BJ (cell line): ENCODE measurements at regions of chr19 and their contacts with region 1.

Region 1: GRCh38 chr19:48842789-48843162 is 6.5 kb upstream of the HSD17B14 start:
- DNase-seq: no peak
- H3K4me3 ChIP-seq: no peak overlapping the region
- H3K27me3 ChIP-seq: no peaks in the 10 kb centered on the region
- CTCF ChIP-seq: peak; percentile 79

Region 2: GRCh38 chr19:48646001-48646721 is 196.6 kb before region 1 on chr19 and contains the start of gene CA11:
- CTCF ChIA-PET with region 1: interaction called, 11 read pairs
- POLR2A ChIA-PET with region 1: no interaction called
- DNase-seq: no peak
- H3K4me3 ChIP-seq: peak within 1 kb of the TSS; percentile 47
- H3K27me3 ChIP-seq: no peaks in the 10 kb centered on the region
- CTCF ChIP-seq: peak; percentile 94
- polyA plus RNA-seq, gene CA11: 3.0 and 3.2 TPM in 2 replicates

Region 3: DNA sequence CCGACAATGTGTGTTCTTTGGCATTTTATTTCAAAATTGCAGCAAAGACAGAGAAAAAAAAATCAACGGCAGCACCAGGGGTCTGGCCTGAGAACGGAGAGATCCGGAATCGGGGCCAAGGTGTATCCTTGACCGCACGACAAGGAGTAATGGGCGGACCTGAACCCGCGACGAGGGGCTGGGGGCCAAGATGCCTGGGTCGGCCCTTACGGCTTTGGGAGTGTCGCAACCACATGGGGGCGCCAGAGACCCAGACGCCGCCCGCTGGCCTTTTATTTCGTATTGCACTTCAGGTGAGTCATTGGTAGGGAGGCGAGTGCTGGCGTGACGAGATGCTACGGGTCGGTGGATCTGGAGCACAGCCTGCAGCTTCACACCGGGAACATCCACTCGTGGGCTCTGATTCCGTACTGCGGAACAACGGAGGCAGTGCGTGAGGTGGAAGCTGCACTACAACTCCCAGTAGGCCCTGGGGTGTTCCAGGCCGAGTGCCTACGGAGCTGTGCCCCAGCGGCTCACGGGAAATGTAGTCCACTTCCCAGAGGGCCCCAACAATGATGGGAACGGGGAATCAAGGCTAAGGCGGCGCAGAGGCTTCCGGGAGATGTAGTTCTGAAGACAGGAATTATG is 47.6 kb before region 1 on chr19:
- CTCF ChIA-PET with region 1: interaction called, 195 read pairs
- POLR2A ChIA-PET with region 1: no interaction called
- DNase-seq: peak; percentile 67
- H3K4me3 ChIP-seq: peak overlapping the region; percentile 20
- H3K27me3 ChIP-seq: no peaks in the 10 kb centered on the region
- CTCF ChIP-seq: peak; percentile 94

Region 4: DNA sequence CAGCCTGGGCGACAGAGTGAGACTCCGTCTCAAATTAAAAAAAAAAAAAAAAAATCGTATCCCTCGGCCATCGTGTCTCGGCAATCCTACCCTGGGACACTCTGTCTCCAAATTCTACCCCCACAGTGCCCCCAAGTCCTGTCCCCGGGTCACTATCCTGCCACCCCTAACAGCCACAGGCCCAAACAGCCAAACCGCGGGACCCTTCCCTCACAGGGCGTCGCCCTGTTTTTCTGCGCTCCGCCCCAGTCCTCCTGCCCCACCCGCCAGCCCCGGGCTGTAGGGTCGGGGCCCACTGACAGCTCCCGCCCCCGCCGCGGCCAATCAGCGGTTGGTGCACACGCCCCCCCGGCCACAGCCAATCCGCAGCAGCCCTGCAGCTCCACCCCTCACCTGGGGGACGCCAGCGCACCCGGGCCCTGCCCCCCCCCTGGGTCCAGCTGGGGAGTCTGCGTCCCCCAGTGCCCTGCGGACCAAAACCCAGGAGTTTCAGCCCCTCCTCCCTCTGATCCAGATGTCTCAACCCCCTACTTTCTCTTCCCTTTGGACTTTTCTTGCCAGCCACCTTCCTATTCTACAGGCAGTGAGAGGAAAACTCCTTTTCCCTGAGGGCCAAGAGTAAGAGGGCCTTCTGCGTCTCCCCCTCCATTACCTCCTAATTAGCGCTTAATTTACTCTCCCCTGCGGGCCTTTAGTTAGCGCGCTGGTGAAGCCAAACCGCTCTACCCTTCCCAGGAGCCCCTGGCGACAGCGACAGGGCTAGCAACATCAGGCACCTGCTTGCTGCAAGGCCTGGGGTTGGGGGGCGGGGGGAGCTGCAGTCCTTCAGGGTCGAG is 30.5 kb before region 1 on chr19:
- CTCF ChIA-PET with region 1: interaction called, 12 read pairs
- POLR2A ChIA-PET with region 1: no interaction called
- DNase-seq: no peak
- H3K4me3 ChIP-seq: peak overlapping the region; percentile 80
- H3K27me3 ChIP-seq: no peaks in the 10 kb centered on the region
- CTCF ChIP-seq: no peak

Region 5: GRCh38 chr19:48856921-48857320 is 14.1 kb after region 1 on chr19:
- CTCF ChIA-PET with region 1: interaction called, 19 read pairs
- POLR2A ChIA-PET with region 1: interaction called, 3 read pairs
- DNase-seq: no peak
- H3K4me3 ChIP-seq: no peak overlapping the region
- H3K27me3 ChIP-seq: no peaks in the 10 kb centered on the region
- CTCF ChIP-seq: no peak

Region 6: DNA sequence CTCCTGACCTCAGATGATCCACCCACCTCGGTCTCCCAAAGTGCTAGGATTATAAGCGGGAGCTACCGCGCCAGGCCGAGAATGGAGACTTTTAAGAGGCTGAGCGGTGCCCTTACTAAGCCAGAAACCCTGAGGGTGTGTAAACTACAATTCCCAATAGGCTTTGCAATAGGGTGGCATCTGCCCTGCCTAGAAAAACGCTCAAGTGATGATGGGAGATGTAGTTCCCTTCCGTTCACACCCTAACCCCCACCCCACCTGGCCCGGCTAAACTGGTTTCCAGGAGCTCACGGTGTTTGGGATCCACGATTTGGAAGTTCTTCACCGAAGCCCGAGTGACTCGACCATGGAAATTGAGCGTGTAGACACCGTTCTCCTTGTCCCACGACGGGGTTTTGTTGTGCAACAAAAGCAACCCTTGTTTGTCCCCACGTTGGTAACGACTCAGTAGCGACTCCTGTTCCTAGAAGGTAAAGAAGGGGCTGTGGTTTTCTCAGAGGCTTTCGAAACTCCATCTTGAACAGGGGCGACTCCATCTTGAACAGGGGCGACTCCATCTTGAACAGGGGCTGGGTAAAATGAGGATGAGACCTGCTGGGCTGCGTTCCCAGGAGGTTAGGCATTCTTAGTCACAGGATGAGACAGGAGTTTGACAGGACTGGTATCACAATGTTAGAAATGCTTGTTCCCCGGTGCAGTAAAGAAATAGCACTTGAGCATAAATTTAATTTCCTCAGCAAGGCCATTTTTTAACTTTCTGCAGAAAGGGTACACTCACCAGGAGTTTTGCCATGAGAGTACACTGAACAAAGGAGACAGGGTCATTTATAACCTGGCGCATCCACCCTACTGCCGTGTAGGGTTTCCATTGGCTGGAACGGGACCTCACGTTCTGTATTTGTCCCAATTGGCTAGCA is 39.2 kb after region 1 on chr19:
- CTCF ChIA-PET with region 1: no interaction called
- POLR2A ChIA-PET with region 1: no interaction called
- DNase-seq: no peak
- H3K4me3 ChIP-seq: no peak overlapping the region
- H3K27me3 ChIP-seq: no peaks in the 10 kb centered on the region
- CTCF ChIP-seq: no peak

Region 7: GRCh38 chr19:48918801-48919247 is 76.0 kb after region 1 on chr19:
- CTCF ChIA-PET with region 1: no interaction called
- POLR2A ChIA-PET with region 1: no interaction called
- DNase-seq: no peak
- H3K4me3 ChIP-seq: no peak overlapping the region
- H3K27me3 ChIP-seq: no peaks in the 10 kb centered on the region
- CTCF ChIP-seq: no peak

Region 8: GRCh38 chr19:48970923-48971395 is 128.2 kb after region 1 on chr19:
- CTCF ChIA-PET with region 1: interaction called, 31 read pairs
- POLR2A ChIA-PET with region 1: no interaction called
- DNase-seq: no peak
- H3K4me3 ChIP-seq: no peak overlapping the region
- H3K27me3 ChIP-seq: no peaks in the 10 kb centered on the region
- CTCF ChIP-seq: peak; percentile 94